HCT116 (cell line): ENCODE measurements at regions of chr2 and their contacts with region 1.

Region 1: GRCh38 chr2:101419096-101419663 is 31.9 kb upstream of the CREG2 start:
- DNase-seq: peak; percentile 49
- ATAC-seq: peak; percentile 91
- H3K4me3 ChIP-seq: no peak overlapping the region
- H3K27ac ChIP-seq: no peak overlapping the region
- H3K4me1 ChIP-seq: no peaks in the 10 kb centered on the region
- H3K27me3 ChIP-seq: no peaks in the 10 kb centered on the region
- CTCF ChIP-seq: peak; percentile 71 to 82 (median 80)
- POLR2A ChIP-seq: no peak
- RAD21 ChIP-seq: peak; percentile 91

Region 2: GRCh38 chr2:101241158-101241557 is 178.0 kb before region 1 on chr2:
- CTCF ChIA-PET with region 1: no interaction called
- POLR2A ChIA-PET with region 1: no interaction called
- RAD21 ChIA-PET with region 1: no interaction called
- intact Hi-C with region 1: no loop called
- DNase-seq: no peak
- ATAC-seq: no peak
- H3K4me3 ChIP-seq: no peak overlapping the region
- H3K27ac ChIP-seq: no peak overlapping the region
- H3K4me1 ChIP-seq: peaks cover 0 to 10% of the 10 kb centered on the region in 2 experiments; a peak in 2 of 4 replicates
- H3K27me3 ChIP-seq: no peaks in the 10 kb centered on the region
- CTCF ChIP-seq: no peak
- POLR2A ChIP-seq: no peak
- RAD21 ChIP-seq: no peak

Region 3: GRCh38 chr2:101518578-101519492 is 99.7 kb after region 1 on chr2:
- CTCF ChIA-PET with region 1: no interaction called
- POLR2A ChIA-PET with region 1: no interaction called
- RAD21 ChIA-PET with region 1: no interaction called
- intact Hi-C with region 1: loop called (anchors 5 kb)
- DNase-seq: peak; percentile 40
- ATAC-seq: peak; percentile 84
- H3K4me3 ChIP-seq: peak overlapping the region in 1 of 2 experiments; percentile 20; a peak in 1 of 4 replicates
- H3K27ac ChIP-seq: no peak overlapping the region
- H3K4me1 ChIP-seq: peaks cover 8 to 30% of the 10 kb centered on the region in 2 experiments; a peak in 3 of 4 replicates
- H3K27me3 ChIP-seq: no peaks in the 10 kb centered on the region
- CTCF ChIP-seq: peak; percentile 48 to 76 (median 58); a peak in 4 of 6 replicates
- POLR2A ChIP-seq: no peak
- RAD21 ChIP-seq: peak; percentile 87

Region 4: DNA sequence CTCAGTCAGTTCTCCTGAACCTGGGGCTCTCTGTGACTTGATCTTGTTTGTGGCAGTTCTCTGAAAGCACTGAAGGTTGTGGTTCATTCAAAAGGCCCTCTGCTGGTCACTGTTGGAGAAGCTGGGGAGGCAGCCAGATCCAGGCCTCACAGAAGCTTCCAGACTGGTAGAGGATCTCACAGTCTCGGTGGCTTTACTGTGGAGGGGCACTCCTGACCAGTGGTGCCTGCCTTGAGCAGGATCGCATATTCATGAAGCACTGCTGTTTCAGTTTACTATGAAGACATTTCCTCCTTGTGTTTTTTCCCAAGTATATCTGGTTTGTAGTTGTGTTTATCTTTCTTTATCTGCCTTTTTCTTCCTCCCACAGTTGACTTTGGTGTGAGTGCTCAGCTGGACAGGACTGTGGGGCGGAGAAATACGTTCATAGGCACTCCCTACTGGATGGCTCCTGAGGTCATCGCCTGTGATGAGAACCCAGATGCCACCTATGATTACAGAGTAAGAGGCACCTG is 412.2 kb after region 1 on chr2:
- CTCF ChIA-PET with region 1: interaction called, 18 read pairs
- POLR2A ChIA-PET with region 1: no interaction called
- RAD21 ChIA-PET with region 1: interaction called in 1 of 2 experiments, 5 read pairs
- intact Hi-C with region 1: loop called (anchors 1 kb)
- DNase-seq: peak; percentile 26
- ATAC-seq: peak; percentile 88
- H3K4me3 ChIP-seq: no peak overlapping the region
- H3K27ac ChIP-seq: peak overlapping the region; percentile 28; the same call in 1 of the 2 replicates
- H3K4me1 ChIP-seq: peaks cover 0 to 12% of the 10 kb centered on the region in 2 experiments; a peak in 1 of 4 replicates
- H3K27me3 ChIP-seq: no peaks in the 10 kb centered on the region
- CTCF ChIP-seq: peak; percentile 65 to 76 (median 66); a peak in 5 of 6 replicates
- POLR2A ChIP-seq: no peak
- RAD21 ChIP-seq: peak; percentile 65

Region 5: GRCh38 chr2:101873543-101873942 is 454.4 kb after region 1 on chr2:
- CTCF ChIA-PET with region 1: interaction called, 10 read pairs
- POLR2A ChIA-PET with region 1: no interaction called
- RAD21 ChIA-PET with region 1: no interaction called
- intact Hi-C with region 1: loop called (anchors 1 kb)
- DNase-seq: no peak
- ATAC-seq: peak; percentile 40; the same call in 1 of the 2 replicates
- H3K4me3 ChIP-seq: no peak overlapping the region
- H3K27ac ChIP-seq: no peak overlapping the region
- H3K4me1 ChIP-seq: no peaks in the 10 kb centered on the region
- H3K27me3 ChIP-seq: no peaks in the 10 kb centered on the region
- CTCF ChIP-seq: peak; percentile 26 to 39 (median 31); a peak in 3 of 6 replicates
- POLR2A ChIP-seq: no peak
- RAD21 ChIP-seq: peak; percentile 55

Region 6: GRCh38 chr2:101983928-101984327 is 564.7 kb after region 1 on chr2:
- CTCF ChIA-PET with region 1: no interaction called
- POLR2A ChIA-PET with region 1: no interaction called
- RAD21 ChIA-PET with region 1: no interaction called
- intact Hi-C with region 1: loop called (anchors 10 kb)
- DNase-seq: no peak
- ATAC-seq: peak; percentile 54
- H3K4me3 ChIP-seq: no peak overlapping the region
- H3K27ac ChIP-seq: no peak overlapping the region
- H3K4me1 ChIP-seq: no peaks in the 10 kb centered on the region
- H3K27me3 ChIP-seq: no peaks in the 10 kb centered on the region
- CTCF ChIP-seq: peak; percentile 27 to 36 (median 28); a peak in 4 of 6 replicates
- POLR2A ChIP-seq: no peak
- RAD21 ChIP-seq: peak; percentile 51

Region 7: GRCh38 chr2:102166189-102166845 is 747.1 kb after region 1 on chr2:
- CTCF ChIA-PET with region 1: no interaction called
- POLR2A ChIA-PET with region 1: no interaction called
- RAD21 ChIA-PET with region 1: no interaction called
- intact Hi-C with region 1: loop called (anchors 10 kb)
- DNase-seq: no peak
- ATAC-seq: peak; percentile 67; the same call in 1 of the 2 replicates
- H3K4me3 ChIP-seq: no peak overlapping the region
- H3K27ac ChIP-seq: no peak overlapping the region
- H3K4me1 ChIP-seq: peaks cover 9 to 12% of the 10 kb centered on the region in 2 experiments
- H3K27me3 ChIP-seq: no peaks in the 10 kb centered on the region
- CTCF ChIP-seq: peak; percentile 40 to 68 (median 47); a peak in 4 of 6 replicates
- POLR2A ChIP-seq: no peak
- RAD21 ChIP-seq: peak; percentile 77

Region 8: GRCh38 chr2:102449370-102449974 is 1030.3 kb after region 1 on chr2:
- CTCF ChIA-PET with region 1: no interaction called
- POLR2A ChIA-PET with region 1: no interaction called
- RAD21 ChIA-PET with region 1: no interaction called
- intact Hi-C with region 1: loop called (anchors 2 kb)
- DNase-seq: peak; percentile 13
- ATAC-seq: peak; percentile 57
- H3K4me3 ChIP-seq: no peak overlapping the region
- H3K27ac ChIP-seq: no peak overlapping the region
- H3K4me1 ChIP-seq: no peaks in the 10 kb centered on the region
- H3K27me3 ChIP-seq: no peaks in the 10 kb centered on the region
- CTCF ChIP-seq: peak; percentile 62 to 74 (median 65)
- POLR2A ChIP-seq: no peak
- RAD21 ChIP-seq: peak; percentile 75